CD8-positive, alpha-beta T cell (primary cell): ENCODE measurements at regions of chr1 and their contacts with region 1.

Region 1: GRCh38 chr1:35192853-35193664 is at the start of gene SFPQ:
- DNase-seq: peak; percentile 96 to 99 (median 97)
- ATAC-seq: peak; percentile 87
- H3K4me3 ChIP-seq: peak within 1 kb of the TSS; percentile 59 to 81
- H3K4me3 Mint-ChIP-seq: peak within 1 kb of the TSS; percentile 95
- H3K27ac ChIP-seq: peak within 1 kb of the TSS; percentile 92 to 97
- H3K27ac Mint-ChIP-seq: peak within 1 kb of the TSS; percentile 99
- H3K4me1 ChIP-seq: peaks cover 36% of the 10 kb centered on the region
- H3K4me1 Mint-ChIP-seq: peaks cover 44% of the 10 kb centered on the region
- H3K27me3 ChIP-seq: no peaks in the 10 kb centered on the region
- H3K27me3 Mint-ChIP-seq: no peaks in the 10 kb centered on the region
- CTCF ChIP-seq: no peak
- total RNA-seq, gene SFPQ: 801 to 841 TPM

Region 2: GRCh38 chr1:34460193-34460592 is 732.9 kb before region 1 on chr1:
- CTCF ChIA-PET with region 1: no interaction called
- POLR2A ChIA-PET with region 1: no interaction called
- intact Hi-C with region 1: no loop called
- DNase-seq: peak in 5 of 9 experiments; percentile 7 to 38 (median 36)
- ATAC-seq: no peak
- H3K4me3 ChIP-seq: no peak overlapping the region
- H3K4me3 Mint-ChIP-seq: no peak overlapping the region
- H3K27ac ChIP-seq: no peak overlapping the region
- H3K27ac Mint-ChIP-seq: no peak overlapping the region
- H3K4me1 ChIP-seq: no peaks in the 10 kb centered on the region
- H3K4me1 Mint-ChIP-seq: no peaks in the 10 kb centered on the region
- H3K27me3 ChIP-seq: no peaks in the 10 kb centered on the region
- H3K27me3 Mint-ChIP-seq: peaks cover 16% of the 10 kb centered on the region
- CTCF ChIP-seq: peak; percentile 33

Region 3: DNA sequence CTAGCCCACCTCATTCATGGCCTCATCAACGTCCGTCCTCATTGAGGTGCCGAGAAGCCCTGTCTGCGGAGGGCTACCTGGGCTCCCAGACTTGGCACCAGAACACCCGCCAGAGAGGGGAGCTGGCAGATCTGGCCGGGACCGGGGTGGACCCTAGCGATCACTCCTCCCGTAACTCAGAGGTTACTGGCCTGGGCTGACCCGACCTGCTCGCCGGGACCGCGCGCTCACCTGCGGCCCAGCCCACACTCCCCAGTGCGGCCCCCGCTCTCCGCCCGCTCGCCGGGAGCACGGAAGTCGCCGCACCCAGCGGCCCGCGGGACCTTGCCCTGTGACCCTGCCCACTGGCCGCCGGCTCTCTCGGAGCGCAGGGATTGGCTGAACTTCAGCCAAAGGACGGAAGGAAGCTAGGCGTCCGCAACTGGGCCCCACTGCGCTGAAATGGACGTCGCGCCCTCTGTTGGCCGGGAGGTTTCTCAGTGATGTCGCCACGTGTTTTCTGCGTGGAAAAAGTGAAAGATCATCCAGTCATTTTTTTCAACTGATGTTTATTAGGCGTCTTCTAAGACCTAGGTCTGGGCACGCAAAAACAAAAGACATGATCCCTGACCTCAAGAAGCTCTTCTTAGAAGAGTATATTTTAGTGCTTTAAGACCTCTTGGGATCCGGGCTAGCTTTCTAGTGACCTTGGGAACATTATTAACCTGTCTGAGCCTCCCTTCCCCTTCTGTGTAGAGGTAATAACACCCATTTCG is 333.4 kb before region 1 on chr1 and contains the start of gene SMIM12:
- CTCF ChIA-PET with region 1: no interaction called
- POLR2A ChIA-PET with region 1: interaction called, 4 read pairs
- intact Hi-C with region 1: loop called (anchors 2 to 5 kb)
- DNase-seq: peak; percentile 76 to 94 (median 92)
- ATAC-seq: peak; percentile 84
- H3K4me3 ChIP-seq: peak within 1 kb of the TSS; percentile 78 to 89
- H3K4me3 Mint-ChIP-seq: peak within 1 kb of the TSS; percentile 90
- H3K27ac ChIP-seq: peak within 1 kb of the TSS; percentile 69 to 89
- H3K27ac Mint-ChIP-seq: peak within 1 kb of the TSS; percentile 96
- H3K4me1 ChIP-seq: peaks cover 46% of the 10 kb centered on the region
- H3K4me1 Mint-ChIP-seq: peaks cover 63% of the 10 kb centered on the region
- H3K27me3 ChIP-seq: no peaks in the 10 kb centered on the region
- H3K27me3 Mint-ChIP-seq: no peaks in the 10 kb centered on the region
- CTCF ChIP-seq: peak; percentile 73
- total RNA-seq, gene SMIM12: 46.6 to 48.7 TPM

Region 4: DNA sequence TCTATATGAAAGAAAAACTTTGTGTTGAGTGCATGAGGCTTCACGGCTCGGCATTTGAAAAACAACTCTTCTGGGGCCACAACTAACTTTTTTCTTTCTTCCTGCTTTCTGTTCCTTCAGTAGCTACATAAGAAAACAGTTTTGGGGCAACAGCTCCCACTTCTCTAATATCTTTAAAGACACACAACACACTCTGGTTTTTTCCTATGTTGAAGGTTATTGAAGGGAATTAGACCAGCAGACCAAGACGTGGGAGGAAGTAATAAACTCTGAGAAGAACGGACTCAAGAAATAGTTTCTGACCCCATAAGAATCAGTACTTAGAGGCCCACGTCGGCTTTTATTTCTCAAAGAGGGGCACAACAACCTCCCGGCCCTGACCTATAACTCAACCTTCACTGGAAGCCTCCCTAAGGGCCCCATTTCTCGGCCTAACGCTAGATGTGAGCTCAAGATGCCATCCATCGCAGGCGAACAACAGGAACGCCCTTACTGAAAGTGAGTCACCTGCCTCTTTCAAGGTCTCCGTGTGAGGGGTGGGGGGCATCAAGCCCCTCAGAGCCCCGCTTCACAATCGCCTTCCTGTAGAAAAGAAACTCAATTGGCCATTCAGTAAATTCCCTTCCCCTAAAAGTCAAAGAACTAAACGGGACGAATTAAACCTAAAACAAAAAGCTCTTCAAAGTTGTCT is 162.2 kb before region 1 on chr1:
- CTCF ChIA-PET with region 1: no interaction called
- POLR2A ChIA-PET with region 1: interaction called, 3 read pairs
- intact Hi-C with region 1: loop called (anchors 1 kb)
- DNase-seq: peak in 8 of 9 experiments; percentile 26 to 65 (median 56)
- ATAC-seq: peak; percentile 59
- H3K4me3 ChIP-seq: peak overlapping the region; percentile 92 to 97
- H3K4me3 Mint-ChIP-seq: peak overlapping the region; percentile 99
- H3K27ac ChIP-seq: peak overlapping the region; percentile 62 to 85
- H3K27ac Mint-ChIP-seq: peak overlapping the region; percentile 98
- H3K4me1 ChIP-seq: peaks cover 25% of the 10 kb centered on the region
- H3K4me1 Mint-ChIP-seq: peaks cover 49% of the 10 kb centered on the region
- H3K27me3 ChIP-seq: no peaks in the 10 kb centered on the region
- H3K27me3 Mint-ChIP-seq: no peaks in the 10 kb centered on the region
- CTCF ChIP-seq: no peak

Region 5: DNA sequence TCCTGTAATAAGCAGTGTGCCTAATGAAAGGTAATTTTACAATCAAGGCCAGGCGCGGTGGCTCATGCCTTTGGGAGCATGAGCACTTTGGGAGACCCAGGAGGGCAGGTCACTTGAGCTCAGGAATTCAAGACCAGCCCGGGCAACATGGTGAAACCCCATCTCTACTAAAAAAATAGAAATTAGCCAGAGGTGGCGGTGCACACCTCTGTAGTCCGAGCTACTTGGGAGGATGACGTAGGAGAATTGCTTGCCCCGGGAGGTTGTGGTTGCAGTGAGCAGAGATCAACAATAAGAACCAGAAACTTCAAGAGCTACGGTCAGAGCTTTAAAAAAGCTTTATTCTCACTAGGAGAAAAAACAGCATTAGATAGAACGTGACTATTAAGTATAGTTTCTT is 35.2 kb before region 1 on chr1:
- CTCF ChIA-PET with region 1: no interaction called
- POLR2A ChIA-PET with region 1: no interaction called
- intact Hi-C with region 1: no loop called
- DNase-seq: no peak
- ATAC-seq: no peak
- H3K4me3 ChIP-seq: no peak overlapping the region
- H3K4me3 Mint-ChIP-seq: no peak overlapping the region
- H3K27ac ChIP-seq: no peak overlapping the region
- H3K27ac Mint-ChIP-seq: no peak overlapping the region
- H3K4me1 ChIP-seq: no peaks in the 10 kb centered on the region
- H3K4me1 Mint-ChIP-seq: no peaks in the 10 kb centered on the region
- H3K27me3 ChIP-seq: peaks cover 0 to 2% of the 10 kb centered on the region in 2 experiments
- H3K27me3 Mint-ChIP-seq: peaks cover 2% of the 10 kb centered on the region
- CTCF ChIP-seq: no peak

Region 6: DNA sequence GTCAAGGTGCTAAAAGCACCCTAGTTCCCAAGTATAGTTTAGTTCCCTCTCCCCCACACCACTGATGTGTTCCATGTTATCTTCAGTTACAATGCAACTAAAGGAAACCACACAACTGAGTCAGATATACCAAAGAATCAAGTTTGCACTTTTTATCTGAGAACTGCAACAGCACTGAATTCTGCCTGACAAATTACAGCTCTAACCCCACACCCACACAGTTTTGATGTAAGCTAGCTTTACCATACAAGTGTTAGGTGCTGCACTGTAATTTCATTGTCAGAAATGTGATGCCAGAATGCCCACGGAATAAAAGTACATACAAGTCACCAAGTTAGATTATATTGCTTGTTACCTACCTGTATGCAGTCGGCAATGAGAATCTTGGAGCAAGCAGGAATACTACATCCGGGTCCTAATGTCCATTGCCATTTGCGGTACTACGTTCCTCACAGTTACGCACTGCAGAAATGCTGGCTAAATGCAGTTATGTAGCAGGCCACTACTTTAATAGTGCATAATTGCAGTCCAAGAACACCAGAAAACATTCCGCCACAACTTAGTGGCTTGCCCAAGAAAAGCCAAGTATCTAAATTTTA is 12.2 kb before region 1 on chr1:
- CTCF ChIA-PET with region 1: no interaction called
- POLR2A ChIA-PET with region 1: interaction called, 12 read pairs
- intact Hi-C with region 1: no loop called
- DNase-seq: no peak
- ATAC-seq: peak; percentile 37
- H3K4me3 ChIP-seq: no peak overlapping the region
- H3K4me3 Mint-ChIP-seq: no peak overlapping the region
- H3K27ac ChIP-seq: no peak overlapping the region
- H3K27ac Mint-ChIP-seq: peak overlapping the region; percentile 1
- H3K4me1 ChIP-seq: peaks cover 69% of the 10 kb centered on the region
- H3K4me1 Mint-ChIP-seq: peaks cover 72% of the 10 kb centered on the region
- H3K27me3 ChIP-seq: no peaks in the 10 kb centered on the region
- H3K27me3 Mint-ChIP-seq: no peaks in the 10 kb centered on the region
- CTCF ChIP-seq: no peak

Region 7: GRCh38 chr1:35641233-35641866 is 448.3 kb after region 1 on chr1 and contains the start of gene PSMB2:
- CTCF ChIA-PET with region 1: no interaction called
- POLR2A ChIA-PET with region 1: no interaction called
- intact Hi-C with region 1: loop called in 1 of 2 experiments (anchors 5 kb)
- DNase-seq: peak; percentile 91 to 99 (median 97)
- ATAC-seq: peak; percentile 94
- H3K4me3 ChIP-seq: peak within 1 kb of the TSS; percentile 94 to 97
- H3K4me3 Mint-ChIP-seq: peak within 1 kb of the TSS; percentile 100
- H3K27ac ChIP-seq: peak within 1 kb of the TSS; percentile 89 to 93
- H3K27ac Mint-ChIP-seq: peak within 1 kb of the TSS; percentile 97
- H3K4me1 ChIP-seq: peaks cover 33% of the 10 kb centered on the region
- H3K4me1 Mint-ChIP-seq: peaks cover 37% of the 10 kb centered on the region
- H3K27me3 ChIP-seq: peaks cover 0 to 8% of the 10 kb centered on the region in 2 experiments
- H3K27me3 Mint-ChIP-seq: peaks cover 16% of the 10 kb centered on the region
- CTCF ChIP-seq: no peak
- total RNA-seq, gene PSMB2: 36.8 to 38.8 TPM

Region 8: GRCh38 chr1:35882945-35883634 is 690.0 kb after region 1 on chr1 and contains the start of gene AGO1:
- CTCF ChIA-PET with region 1: no interaction called
- POLR2A ChIA-PET with region 1: interaction called, 3 read pairs
- intact Hi-C with region 1: loop called in 1 of 2 experiments (anchors 2 kb)
- DNase-seq: peak; percentile 94 to 99 (median 97)
- ATAC-seq: peak; percentile 99
- H3K4me3 ChIP-seq: peak within 1 kb of the TSS; percentile 99 to 100
- H3K4me3 Mint-ChIP-seq: peak within 1 kb of the TSS; percentile 92
- H3K27ac ChIP-seq: peak within 1 kb of the TSS; percentile 59 to 68
- H3K27ac Mint-ChIP-seq: peak within 1 kb of the TSS; percentile 69
- H3K4me1 ChIP-seq: peaks cover 23% of the 10 kb centered on the region
- H3K4me1 Mint-ChIP-seq: peaks cover 52% of the 10 kb centered on the region
- H3K27me3 ChIP-seq: peaks cover 0 to 3% of the 10 kb centered on the region in 2 experiments
- H3K27me3 Mint-ChIP-seq: peaks cover 3% of the 10 kb centered on the region
- CTCF ChIP-seq: peak; percentile 77
- total RNA-seq, gene AGO1: 15.8 TPM